Gastrocnemius medialis (tissue), 4 donors: ENCODE measurements at regions of chr19 and their contacts with region 1.

Region 1: DNA sequence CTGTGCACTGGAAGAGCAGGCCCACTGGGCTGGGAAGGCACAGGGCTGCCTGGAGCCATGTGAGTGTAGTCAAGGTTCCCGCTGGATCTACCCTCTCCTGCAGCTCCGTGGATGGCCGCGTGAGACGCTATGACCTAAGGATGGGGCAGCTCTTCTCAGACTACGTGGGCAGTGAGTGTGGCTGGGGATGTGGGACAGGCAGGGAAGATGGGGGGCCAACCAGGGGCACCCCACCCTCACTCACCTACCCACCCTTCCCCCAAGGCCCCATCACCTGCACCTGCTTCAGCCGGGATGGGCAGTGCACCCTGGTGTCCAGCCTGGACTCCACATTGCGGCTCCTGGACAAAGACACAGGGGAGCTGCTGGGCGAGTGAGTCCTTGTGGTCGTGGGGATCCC is 6.1 kb downstream of the WDR83 start:
- DNase-seq: no peak
- ATAC-seq: no peak
- H3K4me3 ChIP-seq: no peak overlapping the region
- H3K27ac ChIP-seq: no peak overlapping the region
- H3K4me1 ChIP-seq: peaks cover 20 to 21% of the 10 kb centered on the region in 2 donors
- H3K27me3 ChIP-seq: no peaks in the 10 kb centered on the region
- CTCF ChIP-seq: no peak
- POLR2A ChIP-seq: no peak

Region 2: GRCh38 chr19:12564016-12564664 is 108.6 kb before region 1 on chr19:
- in situ Hi-C with region 1: loop called in 2 of 4 experiments (anchors 5 to 10 kb)
- intact Hi-C with region 1: loop called (anchors 1 kb)
- DNase-seq: peak; percentile 55 to 73
- ATAC-seq: peak; percentile 89
- H3K4me3 ChIP-seq: no peak overlapping the region
- H3K27ac ChIP-seq: no peak overlapping the region
- H3K4me1 ChIP-seq: no peaks in the 10 kb centered on the region
- H3K27me3 ChIP-seq: no peaks in the 10 kb centered on the region
- CTCF ChIP-seq: peak; percentile 73 to 89 (median 83)
- POLR2A ChIP-seq: no peak